Panc1 (cell line): ENCODE measurements at regions of chr6 and their contacts with region 1.

Region 1: GRCh38 chr6:2215342-2215741 is 30.1 kb downstream of the GMDS start:
- DNase-seq: no peak
- ATAC-seq: no peak
- H3K4me3 ChIP-seq: no peak overlapping the region
- H3K27ac ChIP-seq: no peak overlapping the region
- H3K4me1 ChIP-seq: no peaks in the 10 kb centered on the region
- H3K27me3 ChIP-seq: no peaks in the 10 kb centered on the region
- CTCF ChIP-seq: no peak

Region 2: DNA sequence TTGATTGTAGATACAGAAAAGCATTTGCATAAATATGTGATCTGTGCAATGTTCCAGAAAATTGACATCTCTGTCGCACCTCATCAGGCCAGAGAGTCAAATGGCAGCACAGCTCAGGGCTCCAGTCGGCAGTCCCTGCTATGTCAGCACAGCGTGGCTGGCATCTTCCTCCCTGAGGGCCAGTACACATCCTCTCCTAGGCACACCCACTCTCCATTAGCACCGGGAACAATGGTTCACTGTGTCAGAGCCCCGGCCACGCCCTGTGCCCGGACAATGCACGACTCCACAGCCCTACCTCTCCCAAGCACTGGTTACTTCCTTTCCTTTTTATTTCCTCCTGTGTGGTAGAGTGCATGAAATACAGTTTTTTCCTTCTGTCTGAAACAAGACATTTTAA is 490.7 kb before region 1 on chr6:
- CTCF ChIA-PET with region 1: interaction called, 10 read pairs
- POLR2A ChIA-PET with region 1: no interaction called
- in situ Hi-C with region 1: no loop called
- intact Hi-C with region 1: no loop called
- DNase-seq: no peak
- ATAC-seq: peak; percentile 48; the same call in 1 of the 2 replicates
- H3K4me3 ChIP-seq: no peak overlapping the region
- H3K27ac ChIP-seq: no peak overlapping the region
- H3K4me1 ChIP-seq: no peaks in the 10 kb centered on the region
- H3K27me3 ChIP-seq: no peaks in the 10 kb centered on the region
- CTCF ChIP-seq: no peak

Region 3: DNA sequence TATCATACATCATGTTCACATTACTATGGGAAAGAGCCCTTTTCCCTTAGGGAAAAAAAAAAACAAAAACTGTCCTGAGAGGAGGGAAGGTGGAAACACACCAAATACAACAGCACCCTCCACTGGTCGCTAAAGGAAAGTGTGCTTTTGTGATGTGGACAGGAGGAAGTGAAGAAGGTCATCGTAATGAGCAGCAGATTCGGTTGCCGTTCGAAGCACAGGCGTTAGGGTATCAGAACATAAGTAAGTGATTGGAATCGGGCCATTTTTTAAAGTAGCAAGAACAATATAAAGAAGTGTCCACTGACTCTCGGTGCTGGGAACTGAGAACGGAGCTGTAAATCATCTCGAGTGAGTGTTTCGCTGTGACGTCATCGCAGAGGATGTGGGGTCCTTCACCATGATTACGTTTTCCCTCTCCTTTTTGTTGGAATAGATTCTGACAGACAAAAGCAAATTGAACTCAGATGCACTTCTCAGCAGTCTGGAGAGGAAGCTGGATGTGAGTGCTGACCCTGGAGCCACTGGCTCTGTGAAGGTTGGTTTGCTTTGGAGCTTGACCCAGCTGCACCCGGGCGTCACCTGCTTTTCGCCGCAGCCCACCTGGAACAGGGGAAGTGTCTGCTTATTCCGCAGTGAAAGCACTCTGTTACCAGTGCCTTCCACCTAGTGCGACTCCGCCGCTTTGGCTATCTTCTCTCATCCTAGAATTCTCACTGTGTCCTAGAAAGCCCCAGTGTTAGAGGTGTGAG is 233.7 kb after region 1 on chr6:
- CTCF ChIA-PET with region 1: interaction called, 5 read pairs
- POLR2A ChIA-PET with region 1: no interaction called
- in situ Hi-C with region 1: no loop called
- intact Hi-C with region 1: loop called (anchors 10 kb)
- DNase-seq: peak; percentile 50
- ATAC-seq: peak; percentile 89
- H3K4me3 ChIP-seq: peak overlapping the region; percentile 13 to 40; a peak in 3 of 4 replicates
- H3K27ac ChIP-seq: no peak overlapping the region
- H3K4me1 ChIP-seq: no peaks in the 10 kb centered on the region
- H3K27me3 ChIP-seq: no peaks in the 10 kb centered on the region; the same call in none of the 2 replicates
- CTCF ChIP-seq: peak; percentile 84